IMR-90 (cell line): ENCODE measurements at regions of chr10 and their contacts with region 1.

Region 1: GRCh38 chr10:110311357-110311949 is 6.7 kb upstream of the SMNDC1 start:
- DNase-seq: peak; percentile 70
- ATAC-seq: peak; percentile 97
- H3K4me3 ChIP-seq: no peak overlapping the region
- H3K27ac ChIP-seq: no peak overlapping the region
- H3K4me1 ChIP-seq: no peaks in the 10 kb centered on the region
- H3K27me3 ChIP-seq: no peaks in the 10 kb centered on the region
- CTCF ChIP-seq: peak; percentile 80
- POLR2A ChIP-seq: no peak
- RAD21 ChIP-seq: peak; percentile 95

Region 2: GRCh38 chr10:110151467-110151866 is 160.0 kb before region 1 on chr10:
- CTCF ChIA-PET with region 1: no interaction called
- POLR2A ChIA-PET with region 1: no interaction called
- dilution Hi-C with region 1: no loop called
- in situ Hi-C with region 1: no loop called
- intact Hi-C with region 1: no loop called
- DNase-seq: no peak
- ATAC-seq: no peak
- H3K4me3 ChIP-seq: no peak overlapping the region
- H3K27ac ChIP-seq: no peak overlapping the region
- H3K4me1 ChIP-seq: no peaks in the 10 kb centered on the region
- H3K27me3 ChIP-seq: peaks cover 30% of the 10 kb centered on the region
- CTCF ChIP-seq: no peak
- POLR2A ChIP-seq: no peak
- RAD21 ChIP-seq: no peak

Region 3: DNA sequence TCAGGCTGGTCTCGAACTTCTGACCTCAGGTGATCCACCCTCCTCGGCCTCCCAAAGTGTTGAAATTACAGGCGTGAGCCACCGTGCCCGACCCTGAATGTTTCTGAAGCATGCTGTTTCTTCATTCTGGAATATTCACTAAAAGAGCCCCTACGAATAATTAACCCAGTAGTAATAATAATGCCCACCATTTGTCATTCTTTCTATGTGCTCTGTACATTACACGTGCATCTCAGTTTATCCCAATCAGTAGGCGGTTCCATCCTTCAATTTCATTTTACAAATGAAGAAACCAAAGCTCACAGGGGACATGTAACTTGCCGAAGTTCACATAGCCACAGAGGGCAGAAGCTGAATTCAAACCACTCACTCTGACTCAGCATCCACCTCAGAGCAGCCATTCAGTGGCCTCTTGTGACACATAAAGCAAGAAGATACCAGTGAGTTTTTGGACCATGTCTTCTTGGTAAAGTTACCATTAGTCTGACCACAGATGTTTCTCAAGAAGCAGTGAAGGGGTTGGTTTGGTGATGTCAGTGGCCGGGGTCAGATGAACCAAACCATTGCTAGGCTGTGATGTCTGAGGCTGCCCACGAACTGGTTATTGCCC is 114.3 kb after region 1 on chr10:
- CTCF ChIA-PET with region 1: no interaction called
- POLR2A ChIA-PET with region 1: no interaction called
- dilution Hi-C with region 1: no loop called
- in situ Hi-C with region 1: no loop called
- intact Hi-C with region 1: loop called (anchors 5 kb)
- DNase-seq: peak; percentile 99
- ATAC-seq: peak; percentile 71
- H3K4me3 ChIP-seq: no peak overlapping the region
- H3K27ac ChIP-seq: peak overlapping the region; percentile 87
- H3K4me1 ChIP-seq: peaks cover 14% of the 10 kb centered on the region
- H3K27me3 ChIP-seq: no peaks in the 10 kb centered on the region
- CTCF ChIP-seq: no peak
- POLR2A ChIP-seq: peak; percentile 28; the same call in 1 of the 2 replicates
- RAD21 ChIP-seq: no peak

Region 4: DNA sequence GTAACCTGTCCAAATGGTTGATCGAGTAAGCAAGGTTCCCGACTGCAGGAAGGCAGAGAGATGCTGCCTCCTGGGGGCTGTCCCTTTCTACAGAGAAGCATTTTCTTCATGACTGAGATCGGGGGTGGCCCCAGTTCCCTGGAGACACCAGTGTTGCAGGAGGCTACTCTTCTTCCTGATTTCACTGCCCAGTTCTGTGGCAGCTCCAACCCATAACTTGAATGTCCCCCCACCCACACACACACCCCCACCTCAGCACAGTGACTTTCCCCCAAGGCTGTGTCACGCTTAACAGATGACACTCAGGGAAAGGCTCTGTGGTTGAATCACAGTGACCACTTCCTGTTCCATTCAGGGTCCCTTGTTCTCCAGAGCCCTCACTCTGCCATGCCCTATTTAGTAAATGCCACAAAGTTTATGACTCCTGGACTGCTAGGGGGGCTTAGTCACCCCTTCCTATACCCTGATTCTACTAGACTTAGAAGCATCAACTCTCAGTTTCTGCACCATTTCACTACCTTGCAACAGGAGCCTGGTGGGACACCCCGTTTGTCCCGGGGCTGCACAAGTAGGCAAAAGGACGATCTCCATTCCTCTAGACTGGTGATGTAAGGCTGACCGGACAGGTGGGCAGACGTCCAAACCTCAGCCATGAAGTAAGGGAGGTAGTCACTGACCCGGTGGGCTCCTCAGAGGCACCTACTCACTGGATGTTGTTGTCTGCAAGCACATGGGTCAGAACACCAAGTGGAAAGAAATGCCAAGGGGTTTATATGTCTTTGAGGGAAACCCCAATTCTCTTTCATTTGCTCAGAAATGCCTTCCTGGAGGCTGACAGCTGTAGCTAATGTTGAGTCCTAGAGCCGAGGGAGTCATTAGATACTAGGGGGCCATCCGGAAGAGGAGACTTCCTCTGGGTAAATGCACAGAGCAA is 224.8 kb after region 1 on chr10:
- CTCF ChIA-PET with region 1: interaction called, 5 read pairs
- POLR2A ChIA-PET with region 1: no interaction called
- dilution Hi-C with region 1: no loop called
- in situ Hi-C with region 1: no loop called
- intact Hi-C with region 1: loop called (anchors 2 kb)
- DNase-seq: peak; percentile 92
- ATAC-seq: peak; percentile 69
- H3K4me3 ChIP-seq: no peak overlapping the region
- H3K27ac ChIP-seq: no peak overlapping the region; the same call in 1 of the 2 replicates
- H3K4me1 ChIP-seq: peaks cover 7% of the 10 kb centered on the region
- H3K27me3 ChIP-seq: no peaks in the 10 kb centered on the region
- CTCF ChIP-seq: peak; percentile 34
- POLR2A ChIP-seq: peak; percentile 15; the same call in 1 of the 2 replicates
- RAD21 ChIP-seq: peak; percentile 51

Region 5: GRCh38 chr10:110600487-110601101 is 289.1 kb after region 1 on chr10:
- CTCF ChIA-PET with region 1: interaction called, 7 read pairs
- POLR2A ChIA-PET with region 1: no interaction called
- dilution Hi-C with region 1: no loop called
- in situ Hi-C with region 1: no loop called
- intact Hi-C with region 1: loop called (anchors 1 kb)
- DNase-seq: peak; percentile 71
- ATAC-seq: peak; percentile 42
- H3K4me3 ChIP-seq: no peak overlapping the region
- H3K27ac ChIP-seq: no peak overlapping the region
- H3K4me1 ChIP-seq: no peaks in the 10 kb centered on the region
- H3K27me3 ChIP-seq: no peaks in the 10 kb centered on the region
- CTCF ChIP-seq: peak; percentile 52
- POLR2A ChIP-seq: no peak
- RAD21 ChIP-seq: peak; percentile 63